ENCODE measurements at regions of chr6 and their contacts with region 1.

Region 1: GRCh38 chr6:33384581-33385020 is 7.0 kb upstream of the KIFC1 start:
- DNase-seq: no peak
- ATAC-seq: no peak
- H3K4me3 ChIP-seq: no peak overlapping the region
- H3K27ac ChIP-seq: no peak overlapping the region
- H3K4me1 ChIP-seq: no peaks in the 10 kb centered on the region
- H3K27me3 ChIP-seq: no peaks in the 10 kb centered on the region
- CTCF ChIP-seq: no peak
- POLR2A ChIP-seq: no peak

Region 2: GRCh38 chr6:33279971-33280511 is 104.6 kb before region 1 on chr6:
- in situ Hi-C with region 1: no loop called
- intact Hi-C with region 1: no loop called
- DNase-seq: peak in 1 of 2 donors; percentile 65
- ATAC-seq: peak; percentile 60 to 76
- H3K4me3 ChIP-seq: no peak overlapping the region
- H3K27ac ChIP-seq: peak overlapping the region in 3 of 4 donors; percentile 10 to 81 (median 40)
- H3K4me1 ChIP-seq: peaks cover 24 to 43% of the 10 kb centered on the region in 2 donors
- H3K27me3 ChIP-seq: no peaks in the 10 kb centered on the region
- CTCF ChIP-seq: peak in 3 of 5 experiments; percentile 39 to 44 (median 44)
- POLR2A ChIP-seq: no peak

Region 3: DNA sequence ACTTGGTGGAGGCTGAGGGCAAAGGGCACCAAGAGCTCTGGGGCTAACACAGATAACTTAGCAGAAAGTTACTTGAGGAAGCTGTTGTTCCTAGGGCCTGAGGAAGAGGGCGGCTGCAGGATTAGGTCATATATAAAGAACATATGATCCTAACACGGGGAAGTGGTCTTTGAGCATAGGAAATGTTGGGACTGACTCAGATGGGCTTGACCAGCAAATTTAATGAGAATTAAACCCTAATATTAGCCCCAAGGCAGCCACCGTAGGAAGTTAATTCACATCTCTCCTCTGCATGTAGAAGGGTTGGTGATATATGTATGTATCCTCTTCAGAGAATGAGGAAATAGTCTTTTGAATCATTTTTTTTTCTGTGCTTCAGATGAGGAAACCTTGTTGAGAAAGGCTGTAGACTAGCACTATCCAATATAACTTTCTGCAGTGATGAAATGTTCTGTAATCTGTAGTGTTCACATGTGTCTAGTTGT is 60.6 kb after region 1 on chr6:
- in situ Hi-C with region 1: loop called in 1 of 4 experiments (anchors 10 kb)
- intact Hi-C with region 1: no loop called
- DNase-seq: no peak
- ATAC-seq: no peak
- H3K4me3 ChIP-seq: no peak overlapping the region
- H3K27ac ChIP-seq: no peak overlapping the region
- H3K4me1 ChIP-seq: no peaks in the 10 kb centered on the region
- H3K27me3 ChIP-seq: no peaks in the 10 kb centered on the region
- CTCF ChIP-seq: no peak
- POLR2A ChIP-seq: no peak

Measured in gastrocnemius medialis (tissue), 4 donors.